A673 (cell line): ENCODE measurements at regions of chr2 and their contacts with region 1.

Region 1: DNA sequence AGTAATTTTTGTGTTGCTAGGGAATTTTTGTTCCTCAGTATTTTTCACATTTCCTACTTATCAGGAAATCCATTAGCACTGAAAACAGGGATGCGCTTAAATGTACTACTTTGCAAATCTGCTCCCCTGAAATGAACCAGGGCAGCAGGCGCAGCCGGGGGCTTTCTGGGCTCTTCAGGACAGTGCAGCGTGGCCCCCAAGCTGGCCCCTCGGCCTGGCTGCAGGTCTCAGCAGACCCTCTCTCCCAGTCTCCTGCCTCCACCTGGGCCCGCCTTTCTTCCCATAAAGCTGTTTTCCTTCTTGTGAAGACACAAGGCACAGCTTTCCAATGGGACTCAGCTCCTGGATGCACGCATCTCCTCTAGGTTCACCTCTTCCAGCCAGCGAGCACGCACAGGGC is 35.3 kb downstream of the EIPR1 start:
- DNase-seq: no peak
- H3K4me3 ChIP-seq: no peak overlapping the region
- H3K27ac ChIP-seq: no peak overlapping the region
- H3K4me1 ChIP-seq: no peaks in the 10 kb centered on the region
- H3K27me3 ChIP-seq: no peaks in the 10 kb centered on the region
- CTCF ChIP-seq: no peak

Region 2: GRCh38 chr2:3316456-3317276 is 25.7 kb before region 1 on chr2:
- CTCF ChIA-PET with region 1: no interaction called
- POLR2A ChIA-PET with region 1: interaction called, 10 read pairs
- intact Hi-C with region 1: no loop called
- DNase-seq: peak; percentile 4
- H3K4me3 ChIP-seq: no peak overlapping the region
- H3K27ac ChIP-seq: no peak overlapping the region
- H3K4me1 ChIP-seq: no peaks in the 10 kb centered on the region
- H3K27me3 ChIP-seq: no peaks in the 10 kb centered on the region
- CTCF ChIP-seq: no peak

Region 3: DNA sequence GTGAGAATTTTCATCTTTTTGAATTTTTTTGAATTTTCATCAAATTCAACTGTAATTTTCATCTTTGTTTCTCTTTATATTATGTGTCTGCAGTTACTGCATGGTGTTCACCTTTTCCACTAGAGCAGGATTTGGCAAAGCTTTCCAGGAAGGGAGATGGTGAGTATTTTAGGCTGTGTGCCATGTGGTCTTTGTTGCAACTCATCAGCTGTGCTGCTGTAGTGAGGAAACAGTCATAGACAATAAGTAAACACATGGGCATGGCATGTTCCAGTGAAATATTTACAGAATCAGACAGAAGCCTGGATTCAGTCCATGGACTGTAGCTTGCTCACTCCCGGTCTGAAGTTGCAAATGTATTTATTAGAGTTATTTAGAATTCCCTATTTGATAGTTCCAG is 481.4 kb after region 1 on chr2:
- CTCF ChIA-PET with region 1: no interaction called
- POLR2A ChIA-PET with region 1: no interaction called
- intact Hi-C with region 1: no loop called
- DNase-seq: no peak
- H3K4me3 ChIP-seq: no peak overlapping the region
- H3K27ac ChIP-seq: no peak overlapping the region
- H3K4me1 ChIP-seq: no peaks in the 10 kb centered on the region
- H3K27me3 ChIP-seq: no peaks in the 10 kb centered on the region
- CTCF ChIP-seq: no peak